Naive thymus-derived CD4-positive, alpha-beta T cell (primary cell): ENCODE measurements at regions of chr6 and their contacts with region 1.

Region 1: DNA sequence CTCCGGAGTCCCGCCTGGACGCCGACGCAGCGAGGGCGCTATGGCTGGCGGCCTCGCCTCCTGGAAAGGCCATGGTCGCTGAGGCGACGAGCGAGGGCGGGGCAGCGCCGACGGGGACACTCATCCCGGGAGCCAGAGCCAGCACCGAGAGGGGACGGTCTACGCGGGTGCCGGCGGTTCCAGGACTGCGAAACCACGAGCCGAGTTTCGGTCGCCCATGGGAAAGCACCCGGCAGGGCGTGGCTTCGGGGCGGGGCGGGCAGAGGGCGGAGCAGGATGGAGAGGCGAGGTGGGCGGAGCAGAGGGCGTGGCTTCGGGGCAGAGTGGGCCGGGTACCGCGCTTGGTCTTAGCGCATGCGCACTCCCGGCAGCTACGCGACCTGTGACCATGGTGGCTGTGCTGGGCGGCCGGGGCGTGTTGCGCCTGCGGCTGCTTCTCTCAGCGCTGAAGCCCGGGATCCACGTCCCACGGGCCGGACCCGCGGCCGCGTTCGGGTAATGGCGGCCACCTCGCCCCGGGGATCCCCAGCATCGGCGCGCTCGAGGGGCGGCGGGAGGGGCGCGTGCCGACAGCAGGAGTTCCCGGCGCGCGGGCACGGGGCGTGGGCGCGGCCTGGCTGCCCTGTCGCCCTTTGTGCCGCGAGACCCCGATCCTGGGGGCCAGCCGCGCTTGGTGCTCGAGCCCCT is at the start of gene BPHL:
- DNase-seq: peak; percentile 97 to 100 (median 99)
- ATAC-seq: peak; percentile 99
- H3K4me3 ChIP-seq: peak within 1 kb of the TSS; percentile 91
- H3K4me3 Mint-ChIP-seq: peak within 1 kb of the TSS; percentile 77 to 93 (median 90)
- H3K27ac ChIP-seq: peak within 1 kb of the TSS; percentile 97
- H3K27ac Mint-ChIP-seq: peak within 1 kb of the TSS; percentile 82 to 97 (median 95)
- H3K4me1 ChIP-seq: peaks cover 0 to 4% of the 10 kb centered on the region in 2 donors
- H3K4me1 Mint-ChIP-seq: peaks cover 12 to 19% (median 18%) of the 10 kb centered on the region in 7 donors
- H3K27me3 ChIP-seq: no peaks in the 10 kb centered on the region
- H3K27me3 Mint-ChIP-seq: peaks cover 0 to 5% (median 0%) of the 10 kb centered on the region in 5 donors
- total RNA-seq, gene BPHL: 7.9 to 18.0 (median 10.0) TPM

Region 2: DNA sequence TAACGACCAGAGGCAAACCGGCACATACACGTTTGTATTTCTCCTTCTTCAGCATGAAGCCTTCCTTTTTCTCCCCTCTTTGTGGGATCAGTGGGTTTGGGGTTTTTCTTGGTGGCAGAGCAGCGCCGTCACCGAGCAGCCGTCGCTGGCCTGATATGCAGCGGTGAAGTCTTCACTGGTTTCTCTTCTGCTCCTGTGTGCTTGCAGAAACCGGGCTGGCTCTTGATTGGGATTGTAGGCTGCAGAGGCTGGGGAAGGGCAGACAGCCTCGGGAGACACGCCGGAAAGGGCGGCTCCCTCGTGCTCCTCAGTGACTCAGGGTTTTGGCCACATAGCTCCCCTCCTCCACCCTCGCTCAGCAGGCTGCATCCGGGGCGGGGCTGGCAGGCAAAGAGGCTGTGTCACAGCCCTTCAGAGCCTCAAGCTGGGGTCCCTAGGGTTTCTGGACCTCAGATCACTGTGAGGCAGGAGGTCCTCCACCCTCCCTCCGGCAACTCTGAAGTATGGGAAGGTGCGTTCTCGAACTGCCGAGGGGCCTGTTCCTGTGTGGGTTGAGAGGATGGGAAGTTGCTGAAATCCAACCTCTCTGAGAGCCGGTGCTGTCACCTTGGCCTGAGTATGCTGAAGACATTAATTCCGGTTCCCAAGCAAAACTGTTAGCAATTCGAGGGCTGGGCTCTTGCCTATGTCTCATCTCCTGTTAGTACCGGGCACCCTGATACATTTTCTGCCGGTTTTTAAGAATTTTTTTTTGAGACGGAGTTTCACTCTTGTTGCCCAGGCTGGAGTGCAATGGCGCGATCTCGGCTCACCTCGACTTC is 94.6 kb before region 1 on chr6:
- CTCF ChIA-PET with region 1: no interaction called
- POLR2A ChIA-PET with region 1: no interaction called
- intact Hi-C with region 1: loop called in 1 of 2 experiments (anchors 1 kb)
- DNase-seq: peak; percentile 57 to 89 (median 72)
- ATAC-seq: peak; percentile 90
- H3K4me3 ChIP-seq: peak overlapping the region; percentile 69
- H3K4me3 Mint-ChIP-seq: peak overlapping the region; percentile 80 to 94 (median 88)
- H3K27ac ChIP-seq: peak overlapping the region; percentile 18
- H3K27ac Mint-ChIP-seq: peak overlapping the region in 8 of 9 donors; percentile 58 to 98 (median 82)
- H3K4me1 ChIP-seq: peaks cover 29 to 38% of the 10 kb centered on the region in 2 donors
- H3K4me1 Mint-ChIP-seq: peaks cover 23 to 56% (median 43%) of the 10 kb centered on the region in 7 donors
- H3K27me3 ChIP-seq: no peaks in the 10 kb centered on the region
- H3K27me3 Mint-ChIP-seq: peaks cover 0 to 1% (median 0%) of the 10 kb centered on the region in 5 donors

Region 3: GRCh38 chr6:3052481-3053230 is 65.8 kb before region 1 on chr6:
- CTCF ChIA-PET with region 1: no interaction called
- POLR2A ChIA-PET with region 1: no interaction called
- intact Hi-C with region 1: loop called in 1 of 2 experiments (anchors 1 kb)
- DNase-seq: no peak
- ATAC-seq: no peak
- H3K4me3 ChIP-seq: peak overlapping the region; percentile 64
- H3K4me3 Mint-ChIP-seq: peak overlapping the region; percentile 70 to 83 (median 76)
- H3K27ac ChIP-seq: no peak overlapping the region
- H3K27ac Mint-ChIP-seq: peak overlapping the region; percentile 52 to 84 (median 69)
- H3K4me1 ChIP-seq: peaks cover 5% of the 10 kb centered on the region in 2 donors
- H3K4me1 Mint-ChIP-seq: peaks cover 7 to 36% (median 17%) of the 10 kb centered on the region in 7 donors
- H3K27me3 ChIP-seq: no peaks in the 10 kb centered on the region
- H3K27me3 Mint-ChIP-seq: peaks cover 0 to 23% (median 0%) of the 10 kb centered on the region in 5 donors

Region 4: GRCh38 chr6:3157131-3157927 is 38.8 kb after region 1 on chr6 and contains the start of gene TUBB2A:
- CTCF ChIA-PET with region 1: interaction called, 3 read pairs
- POLR2A ChIA-PET with region 1: interaction called, 4 read pairs
- intact Hi-C with region 1: loop called (anchors 1 kb)
- DNase-seq: peak; percentile 83 to 96 (median 90)
- ATAC-seq: peak; percentile 87
- H3K4me3 ChIP-seq: peak within 1 kb of the TSS; percentile 61
- H3K4me3 Mint-ChIP-seq: peak within 1 kb of the TSS; percentile 81 to 94 (median 92)
- H3K27ac ChIP-seq: peak within 1 kb of the TSS; percentile 86
- H3K27ac Mint-ChIP-seq: peak within 1 kb of the TSS; percentile 75 to 96 (median 93)
- H3K4me1 ChIP-seq: peaks cover 15 to 17% of the 10 kb centered on the region in 2 donors
- H3K4me1 Mint-ChIP-seq: peaks cover 4 to 37% (median 33%) of the 10 kb centered on the region in 7 donors
- H3K27me3 ChIP-seq: no peaks in the 10 kb centered on the region
- H3K27me3 Mint-ChIP-seq: peaks cover 0 to 52% (median 4%) of the 10 kb centered on the region in 5 donors
- total RNA-seq, gene TUBB2A: 2.2 to 39.6 (median 3.1) TPM

Region 5: DNA sequence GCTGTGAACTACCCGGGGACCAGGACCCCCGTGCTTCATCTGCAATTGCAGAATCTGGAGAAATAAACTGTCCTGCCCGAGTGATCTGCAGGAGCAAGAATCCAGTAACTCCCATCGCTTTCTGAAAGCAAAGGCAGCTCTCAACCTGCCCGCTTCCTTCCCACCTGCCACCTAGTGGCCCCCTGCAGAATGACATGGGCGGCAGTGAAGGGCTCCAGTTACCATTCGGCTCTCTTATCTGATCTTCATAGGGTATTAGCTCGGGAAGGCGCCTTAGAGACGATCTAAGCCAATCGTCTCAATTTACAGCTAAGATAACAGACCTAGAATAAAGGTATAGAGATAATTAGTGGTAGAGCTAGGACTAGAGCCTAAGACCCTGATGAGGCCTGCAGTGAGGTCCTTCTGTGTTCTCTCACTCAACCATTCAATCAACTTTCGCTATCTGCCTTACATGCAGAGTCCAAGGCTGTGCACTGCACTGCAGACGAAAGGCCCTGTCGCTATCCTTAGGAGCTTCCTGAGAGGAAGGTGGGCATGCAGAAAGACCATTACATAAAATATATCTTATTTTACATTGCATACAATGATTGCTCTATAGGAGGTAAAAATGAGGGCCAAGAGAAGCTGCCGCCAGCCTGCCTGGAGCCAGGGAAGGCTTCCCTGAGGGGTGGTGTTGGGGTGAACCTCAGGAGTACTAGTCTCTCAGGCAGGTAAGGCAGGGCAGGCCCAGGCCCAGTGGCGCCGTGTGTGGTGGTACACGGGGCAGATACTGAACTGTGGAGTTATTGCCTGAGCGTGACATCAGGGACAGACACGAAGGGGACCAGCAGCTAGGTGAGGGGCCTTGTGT is 133.2 kb after region 1 on chr6:
- CTCF ChIA-PET with region 1: interaction called, 5 read pairs
- POLR2A ChIA-PET with region 1: no interaction called
- intact Hi-C with region 1: loop called (anchors 2 kb)
- DNase-seq: peak; percentile 58 to 82 (median 76)
- ATAC-seq: peak; percentile 94
- H3K4me3 ChIP-seq: no peak overlapping the region
- H3K4me3 Mint-ChIP-seq: peak overlapping the region in 5 of 10 donors; percentile 11 to 60 (median 40)
- H3K27ac ChIP-seq: no peak overlapping the region
- H3K27ac Mint-ChIP-seq: peak overlapping the region in 1 of 9 donors; percentile 54
- H3K4me1 ChIP-seq: peaks cover 7 to 8% of the 10 kb centered on the region in 2 donors
- H3K4me1 Mint-ChIP-seq: peaks cover 6 to 12% (median 7%) of the 10 kb centered on the region in 7 donors
- H3K27me3 ChIP-seq: no peaks in the 10 kb centered on the region
- H3K27me3 Mint-ChIP-seq: peaks cover 17 to 51% (median 27%) of the 10 kb centered on the region in 5 donors

Region 6: GRCh38 chr6:3258720-3259490 is 140.4 kb after region 1 on chr6 and contains the start of gene PSMG4:
- CTCF ChIA-PET with region 1: interaction called, 3 read pairs
- POLR2A ChIA-PET with region 1: no interaction called
- intact Hi-C with region 1: loop called (anchors 1 kb)
- DNase-seq: peak; percentile 81 to 98 (median 89)
- ATAC-seq: peak; percentile 97
- H3K4me3 ChIP-seq: peak within 1 kb of the TSS; percentile 85
- H3K4me3 Mint-ChIP-seq: peak within 1 kb of the TSS; percentile 85 to 99 (median 97)
- H3K27ac ChIP-seq: peak within 1 kb of the TSS; percentile 80
- H3K27ac Mint-ChIP-seq: peak within 1 kb of the TSS; percentile 84 to 98 (median 92)
- H3K4me1 ChIP-seq: peaks cover 19 to 26% of the 10 kb centered on the region in 2 donors
- H3K4me1 Mint-ChIP-seq: peaks cover 28 to 45% (median 42%) of the 10 kb centered on the region in 7 donors
- H3K27me3 ChIP-seq: no peaks in the 10 kb centered on the region
- H3K27me3 Mint-ChIP-seq: peaks cover 0 to 25% (median 0%) of the 10 kb centered on the region in 5 donors
- total RNA-seq, gene PSMG4: 15.6 to 45.0 (median 27.7) TPM